Transverse colon (tissue), 4 donors: ENCODE measurements at regions of chr2 and their contacts with region 1.

Region 1: DNA sequence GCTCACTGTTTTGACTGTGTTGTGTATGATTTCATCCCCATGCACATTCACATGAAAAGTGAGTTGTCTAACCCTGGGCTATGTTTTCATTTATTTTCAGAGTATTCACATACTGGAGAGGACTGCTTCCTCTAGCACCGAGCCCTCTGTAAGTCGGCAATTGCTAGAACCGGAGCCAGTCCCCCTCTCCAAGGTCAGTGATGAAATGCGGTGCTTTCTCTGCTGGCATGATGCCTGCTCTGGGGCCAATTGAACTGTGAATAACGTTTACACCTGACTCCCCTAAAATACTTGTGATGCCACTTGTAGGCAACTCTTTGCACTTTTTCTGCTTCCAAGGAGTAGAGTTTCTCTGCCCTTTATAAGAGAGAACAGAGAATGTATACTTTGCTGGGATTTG is 126.9 kb downstream of the PRKRA start:
- DNase-seq: no peak
- H3K4me3 ChIP-seq: no peak overlapping the region
- H3K27ac ChIP-seq: no peak overlapping the region
- H3K4me1 ChIP-seq: peaks cover 0 to 23% (median 0%) of the 10 kb centered on the region in 4 donors
- H3K27me3 ChIP-seq: no peaks in the 10 kb centered on the region
- CTCF ChIP-seq: no peak
- EP300 ChIP-seq: no peak
- POLR2A ChIP-seq: no peak

Region 2: DNA sequence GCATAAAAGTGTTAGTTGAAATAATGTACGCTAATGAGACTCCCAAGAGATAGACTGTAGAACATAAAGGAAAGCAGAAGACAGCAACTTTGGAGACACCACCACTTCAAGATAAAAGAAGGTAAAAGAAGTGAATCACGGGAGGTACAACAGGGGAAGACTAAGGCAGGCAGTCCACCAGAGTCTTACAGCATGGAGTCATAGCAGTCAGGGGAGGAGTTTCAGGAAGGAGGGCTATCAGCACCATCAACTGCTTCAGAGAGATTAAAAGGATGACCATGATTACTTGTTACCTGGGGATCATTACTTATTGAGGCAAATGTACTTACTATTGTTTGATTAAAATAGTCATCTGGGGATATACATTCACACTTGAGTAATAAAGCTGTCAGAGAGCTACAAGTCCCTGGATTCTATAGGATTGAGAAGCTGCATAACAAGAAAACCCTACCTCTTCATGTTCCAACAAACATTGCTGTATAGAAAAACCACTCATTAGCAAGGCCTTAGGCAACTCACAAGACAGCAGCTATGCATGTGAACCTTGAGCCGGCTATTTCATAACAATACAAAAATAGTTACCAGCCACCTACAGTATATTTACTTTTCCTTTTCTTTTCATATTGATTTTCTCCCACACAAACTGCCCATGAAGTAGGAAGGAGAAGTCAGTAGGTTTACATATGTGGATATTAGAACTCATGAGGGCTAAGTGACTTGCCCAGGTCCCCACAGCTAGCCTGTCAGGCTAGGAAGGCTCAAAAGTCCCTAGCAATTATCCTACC is 353.2 kb before region 1 on chr2:
- in situ Hi-C with region 1: no loop called
- intact Hi-C with region 1: no loop called
- DNase-seq: no peak
- H3K4me3 ChIP-seq: no peak overlapping the region
- H3K27ac ChIP-seq: no peak overlapping the region
- H3K4me1 ChIP-seq: no peaks in the 10 kb centered on the region
- H3K27me3 ChIP-seq: no peaks in the 10 kb centered on the region
- CTCF ChIP-seq: no peak
- EP300 ChIP-seq: no peak
- POLR2A ChIP-seq: no peak

Region 3: DNA sequence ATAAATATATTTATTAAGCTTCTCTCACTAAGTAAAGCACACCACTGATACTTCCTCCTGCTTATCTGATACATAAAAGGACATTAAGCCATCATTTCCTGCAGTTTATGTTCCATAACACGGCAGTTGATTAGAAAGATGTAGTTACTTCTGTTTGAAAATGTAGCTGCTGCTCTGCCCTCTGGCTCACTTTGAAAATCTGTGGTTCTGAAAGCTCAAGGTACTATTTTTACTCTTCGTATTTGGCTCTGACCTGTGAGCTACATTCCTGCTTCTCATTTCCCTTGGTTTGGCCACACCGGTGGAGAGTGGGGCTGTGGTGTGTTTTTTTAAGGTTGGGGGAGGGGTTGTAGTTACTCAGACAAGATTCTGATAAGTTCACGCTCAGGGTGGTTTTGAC is 495.9 kb after region 1 on chr2:
- in situ Hi-C with region 1: no loop called
- intact Hi-C with region 1: no loop called
- DNase-seq: no peak
- H3K4me3 ChIP-seq: no peak overlapping the region
- H3K27ac ChIP-seq: no peak overlapping the region
- H3K4me1 ChIP-seq: no peaks in the 10 kb centered on the region
- H3K27me3 ChIP-seq: no peaks in the 10 kb centered on the region
- CTCF ChIP-seq: no peak
- EP300 ChIP-seq: no peak
- POLR2A ChIP-seq: no peak

Region 4: GRCh38 chr2:179403624-179404023 is 1079.5 kb after region 1 on chr2:
- in situ Hi-C with region 1: no loop called
- intact Hi-C with region 1: no loop called
- DNase-seq: no peak
- H3K4me3 ChIP-seq: no peak overlapping the region
- H3K27ac ChIP-seq: no peak overlapping the region
- H3K4me1 ChIP-seq: no peaks in the 10 kb centered on the region
- H3K27me3 ChIP-seq: no peaks in the 10 kb centered on the region
- CTCF ChIP-seq: no peak
- EP300 ChIP-seq: no peak
- POLR2A ChIP-seq: no peak

Region 5: GRCh38 chr2:179470089-179470488 is 1146.0 kb after region 1 on chr2:
- in situ Hi-C with region 1: no loop called
- intact Hi-C with region 1: loop called (anchors 5 kb)
- DNase-seq: no peak
- H3K4me3 ChIP-seq: no peak overlapping the region
- H3K27ac ChIP-seq: no peak overlapping the region
- H3K4me1 ChIP-seq: no peaks in the 10 kb centered on the region
- H3K27me3 ChIP-seq: no peaks in the 10 kb centered on the region
- CTCF ChIP-seq: no peak
- EP300 ChIP-seq: no peak
- POLR2A ChIP-seq: no peak